B cell (primary cell): ENCODE measurements at regions of chr15 and their contacts with region 1.

Region 1: DNA sequence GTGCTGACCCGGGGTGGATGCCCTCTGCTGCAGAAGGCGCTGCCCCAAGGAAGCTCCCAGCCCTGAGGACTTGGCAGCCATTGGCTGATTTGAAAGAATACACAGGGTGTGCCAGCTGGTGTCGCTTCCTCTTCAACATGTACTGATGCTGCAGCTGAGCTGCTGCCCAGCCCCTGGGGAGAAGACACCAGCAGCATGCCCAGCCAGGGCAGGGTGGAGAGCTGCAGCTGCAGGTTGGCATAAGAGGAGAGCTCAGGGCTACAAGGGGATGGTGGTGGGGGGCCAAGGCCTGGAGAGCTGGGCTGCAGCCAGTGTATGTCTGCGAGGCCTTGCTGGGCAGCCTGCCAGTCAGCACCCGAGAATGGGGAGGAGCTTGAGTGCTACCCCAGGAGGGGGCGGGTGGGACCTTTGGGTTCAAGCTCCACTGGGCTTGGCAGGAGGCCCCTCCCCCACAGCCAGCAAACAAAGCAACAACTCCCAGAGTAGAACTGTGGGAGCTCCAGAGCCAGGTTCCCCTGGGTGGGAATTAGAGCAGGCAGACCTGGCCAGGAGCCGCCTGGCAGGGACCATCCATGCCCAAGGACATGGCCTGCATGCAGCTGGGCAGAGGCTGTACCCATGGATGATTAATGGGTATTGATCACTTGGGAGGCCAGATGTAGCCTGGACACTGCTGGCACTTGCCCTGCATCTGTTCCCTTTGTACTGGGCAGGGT is 9.2 kb upstream of the SEMA4B start:
- DNase-seq: peak; percentile 90
- ATAC-seq: peak; percentile 70
- H3K4me3 ChIP-seq: peak overlapping the region; percentile 45 to 58 (median 53)
- H3K4me3 Mint-ChIP-seq: peak overlapping the region; percentile 87
- H3K27ac ChIP-seq: peak overlapping the region; percentile 88 to 91
- H3K27ac Mint-ChIP-seq: peak overlapping the region; percentile 97
- H3K4me1 ChIP-seq: peaks cover 81 to 96% of the 10 kb centered on the region in 2 donors
- H3K4me1 Mint-ChIP-seq: peaks cover 82% of the 10 kb centered on the region
- H3K27me3 ChIP-seq: no peaks in the 10 kb centered on the region
- H3K27me3 Mint-ChIP-seq: no peaks in the 10 kb centered on the region
- CTCF ChIP-seq: no peak

Region 2: GRCh38 chr15:90165659-90166421 is 26.1 kb before region 1 on chr15:
- CTCF ChIA-PET with region 1: interaction called, 82 read pairs
- POLR2A ChIA-PET with region 1: interaction called, 9 read pairs
- intact Hi-C with region 1: no loop called
- DNase-seq: no peak
- ATAC-seq: peak; percentile 53
- H3K4me3 ChIP-seq: no peak overlapping the region
- H3K4me3 Mint-ChIP-seq: peak overlapping the region; percentile 30
- H3K27ac ChIP-seq: no peak overlapping the region
- H3K27ac Mint-ChIP-seq: peak overlapping the region; percentile 59
- H3K4me1 ChIP-seq: peaks cover 22 to 40% of the 10 kb centered on the region in 2 donors
- H3K4me1 Mint-ChIP-seq: peaks cover 56% of the 10 kb centered on the region
- H3K27me3 ChIP-seq: no peaks in the 10 kb centered on the region
- H3K27me3 Mint-ChIP-seq: no peaks in the 10 kb centered on the region
- CTCF ChIP-seq: no peak

Region 3: DNA sequence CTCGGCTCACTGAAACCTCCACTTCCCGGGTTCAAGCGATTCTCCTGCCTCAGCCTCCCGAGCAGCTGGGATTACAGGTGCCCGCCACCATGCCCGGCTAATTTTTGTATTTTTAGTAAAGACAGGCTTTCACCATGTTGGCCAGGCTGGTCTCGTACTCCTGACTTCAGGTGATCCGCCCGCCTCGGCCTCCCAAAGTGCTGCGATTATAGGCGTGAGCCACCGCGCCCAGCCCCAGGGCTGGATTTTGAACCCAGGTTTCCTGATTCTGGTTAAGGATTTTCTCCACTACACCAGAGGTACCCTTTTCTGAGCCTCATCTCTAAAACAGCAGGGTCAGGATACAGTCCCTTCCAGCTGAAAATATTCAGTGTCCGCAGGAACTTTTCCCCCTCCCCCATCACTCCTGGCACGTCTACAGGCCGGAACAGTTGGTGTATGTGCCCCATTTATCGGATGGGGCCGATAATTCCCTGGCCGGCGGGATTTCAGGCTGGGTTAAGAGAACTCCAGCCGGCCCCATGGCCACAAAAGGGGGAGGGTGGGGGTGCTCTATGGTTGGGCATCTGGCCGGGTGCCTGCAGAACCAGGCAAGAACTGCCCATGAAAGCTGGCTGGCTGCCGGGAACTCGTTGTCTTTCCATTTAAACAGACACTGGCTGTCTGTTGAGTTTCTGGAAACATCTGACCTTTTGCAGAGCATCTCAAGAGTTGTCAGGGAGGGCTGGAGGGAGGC is 17.6 kb before region 1 on chr15:
- CTCF ChIA-PET with region 1: interaction called, 24 read pairs
- POLR2A ChIA-PET with region 1: interaction called, 9 read pairs
- intact Hi-C with region 1: no loop called
- DNase-seq: no peak
- ATAC-seq: no peak
- H3K4me3 ChIP-seq: no peak overlapping the region
- H3K4me3 Mint-ChIP-seq: no peak overlapping the region
- H3K27ac ChIP-seq: no peak overlapping the region
- H3K27ac Mint-ChIP-seq: no peak overlapping the region
- H3K4me1 ChIP-seq: peaks cover 16 to 20% of the 10 kb centered on the region in 2 donors
- H3K4me1 Mint-ChIP-seq: peaks cover 19% of the 10 kb centered on the region
- H3K27me3 ChIP-seq: no peaks in the 10 kb centered on the region
- H3K27me3 Mint-ChIP-seq: no peaks in the 10 kb centered on the region
- CTCF ChIP-seq: no peak

Region 4: DNA sequence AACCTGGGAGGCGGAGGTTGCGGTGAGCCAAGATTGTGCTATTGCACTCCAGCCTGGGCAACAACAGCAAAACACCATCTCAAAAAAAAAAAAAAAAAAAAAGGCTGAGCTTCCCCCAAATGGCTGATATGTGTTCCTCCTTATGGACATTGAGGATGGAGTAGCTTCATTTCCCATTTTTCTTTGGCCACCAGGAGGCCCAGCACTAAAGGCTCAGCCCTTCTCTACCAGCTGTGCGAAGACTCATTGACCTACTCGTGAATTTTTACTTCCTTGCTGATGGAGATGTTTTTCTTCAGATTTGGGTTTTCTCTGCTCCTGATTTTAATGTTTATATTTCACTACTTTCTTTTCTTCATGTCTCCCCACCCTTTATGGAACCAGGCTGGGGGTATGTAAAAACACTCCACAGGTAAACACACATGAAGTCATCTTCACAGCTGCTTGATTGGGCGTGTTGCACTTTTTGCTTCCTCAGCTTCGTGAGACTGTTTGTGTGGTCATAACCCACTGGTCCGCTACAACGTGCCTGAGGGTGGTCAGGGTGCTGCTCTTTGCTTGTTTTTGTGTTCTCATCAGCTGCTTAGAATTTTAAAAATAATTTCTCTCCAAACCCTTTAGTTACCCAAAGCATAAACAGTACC is 22.7 kb after region 1 on chr15:
- CTCF ChIA-PET with region 1: interaction called, 274 read pairs
- POLR2A ChIA-PET with region 1: interaction called, 163 read pairs
- intact Hi-C with region 1: loop called (anchors 1 kb)
- DNase-seq: peak; percentile 69
- ATAC-seq: peak; percentile 64
- H3K4me3 ChIP-seq: peak overlapping the region in 2 of 5 experiments; percentile 9 to 53
- H3K4me3 Mint-ChIP-seq: peak overlapping the region; percentile 70
- H3K27ac ChIP-seq: peak overlapping the region; percentile 80 to 86
- H3K27ac Mint-ChIP-seq: peak overlapping the region; percentile 90
- H3K4me1 ChIP-seq: peaks cover 99 to 100% of the 10 kb centered on the region in 2 donors
- H3K4me1 Mint-ChIP-seq: peaks cover 94% of the 10 kb centered on the region
- H3K27me3 ChIP-seq: no peaks in the 10 kb centered on the region
- H3K27me3 Mint-ChIP-seq: no peaks in the 10 kb centered on the region
- CTCF ChIP-seq: peak; percentile 28

Region 5: GRCh38 chr15:90265271-90266060 is 73.5 kb after region 1 on chr15 and contains the start of gene NGRN:
- CTCF ChIA-PET with region 1: no interaction called
- POLR2A ChIA-PET with region 1: no interaction called
- intact Hi-C with region 1: loop called (anchors 2 kb)
- DNase-seq: peak; percentile 97
- ATAC-seq: peak; percentile 86
- H3K4me3 ChIP-seq: peak within 1 kb of the TSS; percentile 69 to 83 (median 79)
- H3K4me3 Mint-ChIP-seq: peak within 1 kb of the TSS; percentile 95
- H3K27ac ChIP-seq: peak within 1 kb of the TSS; percentile 95 to 99
- H3K27ac Mint-ChIP-seq: peak within 1 kb of the TSS; percentile 98
- H3K4me1 ChIP-seq: peaks cover 36 to 38% of the 10 kb centered on the region in 2 donors
- H3K4me1 Mint-ChIP-seq: peaks cover 52% of the 10 kb centered on the region
- H3K27me3 ChIP-seq: no peaks in the 10 kb centered on the region
- H3K27me3 Mint-ChIP-seq: no peaks in the 10 kb centered on the region
- CTCF ChIP-seq: no peak
- total RNA-seq, gene NGRN: 42.6 and 45.5 TPM in 2 replicates

Region 6: GRCh38 chr15:90387537-90388461 is 195.8 kb after region 1 on chr15 and contains the start of gene IQGAP1:
- CTCF ChIA-PET with region 1: no interaction called
- POLR2A ChIA-PET with region 1: interaction called, 4 read pairs
- intact Hi-C with region 1: loop called (anchors 1 kb)
- DNase-seq: peak; percentile 97
- ATAC-seq: peak; percentile 86
- H3K4me3 ChIP-seq: peak within 1 kb of the TSS; percentile 72 to 93 (median 87)
- H3K4me3 Mint-ChIP-seq: peak within 1 kb of the TSS; percentile 92
- H3K27ac ChIP-seq: peak within 1 kb of the TSS; percentile 91 to 95
- H3K27ac Mint-ChIP-seq: peak within 1 kb of the TSS; percentile 99
- H3K4me1 ChIP-seq: peaks cover 22 to 26% of the 10 kb centered on the region in 2 donors
- H3K4me1 Mint-ChIP-seq: peaks cover 36% of the 10 kb centered on the region
- H3K27me3 ChIP-seq: no peaks in the 10 kb centered on the region
- H3K27me3 Mint-ChIP-seq: no peaks in the 10 kb centered on the region
- CTCF ChIP-seq: no peak
- total RNA-seq, gene IQGAP1: 216 and 233 TPM in 2 replicates